Activated CD4-positive, alpha-beta T cell treated with anti-CD3 and anti-CD28 coated beads, Interleukin-2, amount 10 ng/mL, durations not matched to agents 7 days and 5 days (primary cell): ENCODE measurements at regions of chr1 and their contacts with region 1.

Region 1: GRCh38 chr1:225777583-225778336 is at the start of gene SRP9:
- DNase-seq: peak; percentile 100
- H3K4me3 Mint-ChIP-seq: no peak within 1 kb of the TSS
- H3K27ac Mint-ChIP-seq: no peak within 1 kb of the TSS
- H3K4me1 Mint-ChIP-seq: peaks cover 29% of the 10 kb centered on the region
- H3K27me3 Mint-ChIP-seq: no peaks in the 10 kb centered on the region
- total RNA-seq, gene SRP9: 219 to 249 TPM

Region 2: GRCh38 chr1:225766967-225767633 is 10.7 kb before region 1 on chr1:
- CTCF ChIA-PET with region 1: interaction called, 21 read pairs
- POLR2A ChIA-PET with region 1: interaction called, 6 read pairs
- DNase-seq: no peak
- H3K4me3 Mint-ChIP-seq: no peak overlapping the region
- H3K27ac Mint-ChIP-seq: no peak overlapping the region
- H3K4me1 Mint-ChIP-seq: no peaks in the 10 kb centered on the region
- H3K27me3 Mint-ChIP-seq: no peaks in the 10 kb centered on the region

Region 3: GRCh38 chr1:225794954-225795353 is 17.2 kb after region 1 on chr1:
- CTCF ChIA-PET with region 1: interaction called, 19 read pairs
- POLR2A ChIA-PET with region 1: no interaction called
- DNase-seq: no peak
- H3K4me3 Mint-ChIP-seq: no peak overlapping the region
- H3K27ac Mint-ChIP-seq: no peak overlapping the region
- H3K4me1 Mint-ChIP-seq: no peaks in the 10 kb centered on the region
- H3K27me3 Mint-ChIP-seq: no peaks in the 10 kb centered on the region